A673 (cell line): ENCODE measurements at regions of chr1 and their contacts with region 1.

Region 1: DNA sequence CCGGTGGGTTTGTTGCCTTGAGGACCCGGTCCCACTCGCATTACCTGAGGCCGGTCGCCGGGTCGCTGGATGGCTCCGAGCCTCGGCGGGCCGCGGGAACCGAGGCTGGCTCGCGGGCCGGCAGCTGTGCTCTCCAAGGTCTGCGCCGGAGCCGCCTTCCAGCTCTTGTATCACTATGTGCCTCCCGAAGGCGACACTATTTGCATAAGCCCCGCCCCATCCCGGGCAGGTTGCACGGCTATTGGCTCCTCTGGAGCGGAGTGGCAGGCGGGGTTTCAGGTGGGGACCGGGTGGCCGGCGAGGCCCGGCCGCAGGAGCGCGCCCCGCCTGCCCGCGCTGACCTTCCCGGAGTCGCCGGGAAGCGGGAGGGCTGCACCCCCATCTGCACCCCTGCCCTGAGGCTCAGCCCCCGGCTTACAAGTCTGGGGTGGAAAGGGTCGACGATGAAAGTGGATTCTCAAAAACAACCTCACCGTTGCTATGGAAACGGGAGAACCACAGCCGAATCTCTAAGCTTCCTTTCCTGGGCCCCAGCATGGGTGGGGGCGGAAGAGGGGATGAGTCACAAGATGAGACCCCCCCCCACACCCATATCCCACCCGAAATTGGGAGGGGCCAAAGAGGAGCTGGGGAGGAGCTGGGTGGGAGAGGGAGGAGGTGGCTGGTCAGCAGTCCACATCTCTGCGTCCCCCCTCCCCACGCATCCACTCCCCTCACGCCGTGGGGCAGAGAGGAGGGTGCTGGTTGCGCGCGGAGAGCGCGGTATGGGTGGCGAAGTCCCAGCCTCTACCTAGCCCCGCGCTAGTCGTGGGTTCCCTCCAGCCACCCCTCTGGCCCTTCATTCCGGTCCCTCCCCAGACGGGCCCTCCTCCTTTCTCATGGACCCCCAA is at the start of gene HPCAL4:
- DNase-seq: peak; percentile 94
- H3K4me3 ChIP-seq: peak within 1 kb of the TSS; percentile 39
- H3K27ac ChIP-seq: no peak within 1 kb of the TSS
- H3K4me1 ChIP-seq: peaks cover 11% of the 10 kb centered on the region
- H3K27me3 ChIP-seq: peaks cover 73% of the 10 kb centered on the region
- CTCF ChIP-seq: no peak
- total RNA-seq, gene HPCAL4: not detected in 2 replicates

Region 2: DNA sequence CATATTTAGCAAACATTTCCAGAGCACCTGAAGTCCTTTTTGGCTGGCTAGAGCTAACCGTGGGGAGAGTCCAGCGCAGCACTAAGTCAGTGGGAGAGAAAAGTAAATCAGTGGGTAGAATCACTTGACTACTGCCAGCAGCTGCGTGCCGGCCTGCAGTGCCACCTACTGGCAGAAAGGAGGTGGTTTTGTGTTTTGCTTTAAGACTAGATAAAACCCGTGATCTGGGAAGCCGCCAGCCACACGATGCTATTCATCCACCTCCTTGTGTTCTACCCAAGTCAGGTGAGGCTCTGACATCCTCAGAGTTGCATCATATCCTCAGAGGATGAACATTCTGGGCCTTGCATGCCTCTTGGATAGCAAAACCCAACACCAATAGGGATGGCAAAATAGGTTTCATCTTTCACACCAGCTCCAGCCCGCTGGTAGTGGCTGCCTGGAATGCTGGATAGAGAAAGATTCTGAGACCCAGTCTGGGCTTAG is 37.9 kb before region 1 on chr1:
- CTCF ChIA-PET with region 1: no interaction called
- POLR2A ChIA-PET with region 1: no interaction called
- intact Hi-C with region 1: loop called (anchors 2 kb)
- DNase-seq: peak; percentile 83
- H3K4me3 ChIP-seq: no peak overlapping the region
- H3K27ac ChIP-seq: no peak overlapping the region
- H3K4me1 ChIP-seq: no peaks in the 10 kb centered on the region
- H3K27me3 ChIP-seq: no peaks in the 10 kb centered on the region
- CTCF ChIP-seq: peak; percentile 90